Prostate gland (tissue), 2 donors: ENCODE measurements at regions of chr14 and their contacts with region 1.

Region 1: DNA sequence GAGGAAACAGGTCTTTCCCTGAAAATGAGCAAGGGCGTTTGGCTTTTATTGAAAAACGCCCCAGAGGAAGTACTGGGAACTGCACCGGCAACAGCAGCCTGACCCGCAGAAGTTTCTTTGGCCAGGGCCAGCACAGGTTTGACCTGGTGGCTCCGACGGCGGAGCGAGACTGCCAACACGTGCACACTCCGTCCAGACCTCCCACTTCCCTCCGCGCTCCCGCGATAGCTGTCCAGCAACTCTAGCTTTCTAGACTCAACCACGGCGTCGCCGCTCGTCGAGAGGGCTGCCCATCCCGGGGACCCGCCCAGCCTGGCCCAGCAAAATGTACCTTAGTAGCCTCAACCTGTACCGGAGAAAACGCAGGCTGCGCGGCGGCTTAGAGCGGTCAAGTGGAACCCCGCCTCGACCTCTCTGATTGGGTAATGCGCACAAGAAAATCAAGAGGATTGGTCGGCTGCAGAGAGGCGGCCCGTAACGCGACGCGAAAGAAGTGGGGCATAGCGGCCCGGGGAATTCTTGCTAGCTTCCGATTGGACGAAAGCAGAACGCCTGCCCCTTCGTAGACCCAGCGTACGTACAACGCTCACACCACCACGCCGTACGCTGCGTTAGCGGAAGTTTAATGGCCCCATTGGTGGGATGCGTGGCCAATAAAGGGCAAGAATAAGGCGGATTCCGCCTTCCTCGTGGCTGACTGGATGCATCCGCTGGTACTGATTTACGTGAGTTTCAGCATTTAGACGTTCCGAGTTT is at the start of gene WDR89:
- DNase-seq: peak; percentile 99
- H3K4me3 ChIP-seq: peak within 1 kb of the TSS; percentile 49 to 53
- H3K27ac ChIP-seq: peak within 1 kb of the TSS; percentile 95 to 96
- H3K4me1 ChIP-seq: peaks cover 2% of the 10 kb centered on the region
- H3K27me3 ChIP-seq: no peaks in the 10 kb centered on the region
- CTCF ChIP-seq: peak; percentile 34 to 85 (median 71)
- POLR2A ChIP-seq: peak; percentile 79
- total RNA-seq, gene WDR89: 4.9 to 8.9 TPM

Region 2: DNA sequence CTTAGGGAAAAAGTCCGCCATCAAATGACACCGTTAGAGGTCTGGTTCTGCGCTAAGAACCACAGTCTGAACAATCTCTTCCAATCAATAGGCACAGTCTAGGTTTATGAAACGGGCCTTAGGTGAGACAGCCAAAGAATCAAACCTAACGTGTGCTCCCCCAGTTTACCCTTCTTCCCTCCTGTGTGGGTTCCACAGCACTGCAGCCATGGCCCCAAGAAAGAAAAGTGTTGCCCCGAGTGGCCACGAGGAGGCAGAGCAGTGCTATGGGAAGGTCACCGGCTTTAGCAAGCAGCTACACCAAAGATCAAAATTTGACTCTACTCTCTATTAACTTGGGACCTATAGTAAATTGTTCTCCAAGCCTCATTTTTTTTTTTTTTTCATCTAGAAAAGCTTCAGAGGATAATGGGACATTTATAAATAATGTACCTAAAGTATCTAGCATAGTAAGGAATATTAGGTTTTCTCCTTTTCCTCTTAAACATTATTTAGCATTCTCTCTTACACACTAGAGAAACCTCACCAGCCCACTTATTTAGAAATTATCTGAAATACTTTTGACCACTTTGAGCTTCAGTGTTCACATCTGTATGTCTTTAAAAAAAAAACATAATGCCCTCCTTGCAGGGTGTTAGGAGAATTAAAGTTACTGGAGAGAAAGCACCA is 252.8 kb before region 1 on chr14:
- intact Hi-C with region 1: loop called (anchors 5 kb)
- DNase-seq: peak; percentile 30
- H3K4me3 ChIP-seq: no peak overlapping the region
- H3K27ac ChIP-seq: no peak overlapping the region
- H3K4me1 ChIP-seq: no peaks in the 10 kb centered on the region
- H3K27me3 ChIP-seq: no peaks in the 10 kb centered on the region
- CTCF ChIP-seq: peak; percentile 59 to 84 (median 73)
- POLR2A ChIP-seq: no peak

Region 3: DNA sequence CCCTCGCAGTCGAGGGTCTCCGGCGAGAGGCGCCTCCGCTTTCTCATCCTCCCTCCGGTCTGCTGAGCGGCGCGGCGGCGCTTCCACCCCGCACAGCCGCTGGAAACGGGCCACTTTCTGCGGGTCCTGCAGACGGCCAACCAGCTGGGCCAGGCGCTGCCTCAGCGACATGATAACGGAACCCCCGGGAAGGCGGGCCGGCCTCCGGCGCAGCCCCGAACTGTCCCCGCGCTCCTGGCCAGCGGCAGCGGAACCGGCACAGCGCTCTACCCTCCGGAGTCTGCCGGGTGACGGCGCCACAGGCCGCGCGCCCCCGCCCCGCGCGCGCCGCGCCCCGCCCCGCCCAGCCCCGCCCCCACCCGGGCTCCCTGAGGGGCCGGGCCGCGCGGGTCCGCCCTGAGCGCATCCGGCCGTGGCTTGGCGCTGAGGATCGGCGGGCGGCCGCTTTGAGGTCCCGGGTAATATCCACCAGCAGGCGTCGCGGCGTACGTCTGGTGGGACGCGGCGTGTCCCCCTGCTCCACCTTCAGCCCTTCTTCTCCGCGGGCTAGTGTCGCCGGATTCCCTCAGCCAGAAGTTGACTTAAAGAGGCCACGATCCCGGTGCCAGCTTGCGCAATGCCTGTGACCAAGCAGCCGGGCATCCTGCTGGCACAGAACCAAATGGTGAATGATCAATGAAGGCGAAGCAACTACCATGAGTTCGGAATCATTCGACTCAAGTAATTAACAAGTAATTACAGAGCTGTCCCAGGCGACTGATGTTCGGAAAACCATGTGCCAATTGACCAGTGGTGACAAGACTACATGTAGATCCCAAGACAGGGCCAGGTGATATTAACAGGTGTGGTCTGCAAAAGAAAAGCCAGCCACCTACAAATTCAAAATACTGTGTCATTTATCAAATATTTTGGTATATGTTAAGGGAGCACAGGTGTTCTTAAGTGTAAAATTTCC is 86.4 kb after region 1 on chr14 and contains the start of gene SGPP1:
- intact Hi-C with region 1: loop called (anchors 5 kb)
- DNase-seq: peak; percentile 58
- H3K4me3 ChIP-seq: peak within 1 kb of the TSS; percentile 97 to 98
- H3K27ac ChIP-seq: peak within 1 kb of the TSS; percentile 77 to 82
- H3K4me1 ChIP-seq: no peaks in the 10 kb centered on the region
- H3K27me3 ChIP-seq: no peaks in the 10 kb centered on the region
- CTCF ChIP-seq: peak in 3 of 4 experiments; percentile 12 to 30 (median 28)
- POLR2A ChIP-seq: peak; percentile 48
- total RNA-seq, gene SGPP1: 19.7 to 37.5 TPM